ENCODE measurements at regions of chr15 and their contacts with region 1.

Region 1: GRCh38 chr15:56245871-56246814 is 2.5 kb upstream of the RFX7 start:
- DNase-seq: peak; percentile 91
- ATAC-seq: peak; percentile 67
- H3K4me3 ChIP-seq: peak overlapping the region; percentile 76
- H3K27ac ChIP-seq: peak overlapping the region; percentile 34; the same call in 1 of the 2 replicates
- H3K4me1 ChIP-seq: peaks cover 9% of the 10 kb centered on the region; the same call in 1 of the 2 replicates
- H3K27me3 ChIP-seq: no peaks in the 10 kb centered on the region
- CTCF ChIP-seq: peak; percentile 100

Region 2: GRCh38 chr15:55993111-55993803 is 252.9 kb before region 1 on chr15 and contains the start of gene NEDD4:
- CTCF ChIA-PET with region 1: no interaction called
- POLR2A ChIA-PET with region 1: no interaction called
- intact Hi-C with region 1: loop called (anchors 5 kb)
- DNase-seq: peak; percentile 81
- ATAC-seq: peak; percentile 91
- H3K4me3 ChIP-seq: peak within 1 kb of the TSS; percentile 72
- H3K27ac ChIP-seq: peak within 1 kb of the TSS; percentile 23; the same call in 1 of the 2 replicates
- H3K4me1 ChIP-seq: peaks cover 12% of the 10 kb centered on the region
- H3K27me3 ChIP-seq: no peaks in the 10 kb centered on the region
- CTCF ChIP-seq: peak; percentile 28
- total RNA-seq, gene NEDD4: 7.5 and 9.6 TPM in 2 replicates

Region 3: GRCh38 chr15:56098195-56098863 is 147.8 kb before region 1 on chr15:
- CTCF ChIA-PET with region 1: interaction called, 18 read pairs
- POLR2A ChIA-PET with region 1: no interaction called
- intact Hi-C with region 1: no loop called
- DNase-seq: peak; percentile 32
- ATAC-seq: no peak
- H3K4me3 ChIP-seq: no peak overlapping the region
- H3K27ac ChIP-seq: no peak overlapping the region
- H3K4me1 ChIP-seq: no peaks in the 10 kb centered on the region
- H3K27me3 ChIP-seq: no peaks in the 10 kb centered on the region
- CTCF ChIP-seq: peak; percentile 52; the same call in 1 of the 2 replicates

Region 4: GRCh38 chr15:56365075-56365711 is 119.0 kb after region 1 on chr15 and contains the start of gene TEX9:
- CTCF ChIA-PET with region 1: no interaction called
- POLR2A ChIA-PET with region 1: no interaction called
- intact Hi-C with region 1: loop called (anchors 5 kb)
- DNase-seq: peak; percentile 77
- ATAC-seq: peak; percentile 98
- H3K4me3 ChIP-seq: peak within 1 kb of the TSS; percentile 97
- H3K27ac ChIP-seq: no peak within 1 kb of the TSS
- H3K4me1 ChIP-seq: no peaks in the 10 kb centered on the region
- H3K27me3 ChIP-seq: no peaks in the 10 kb centered on the region
- CTCF ChIP-seq: no peak
- total RNA-seq, gene TEX9: 2.4 and 3.3 TPM in 2 replicates

Region 5: GRCh38 chr15:56383010-56383409 is 136.9 kb after region 1 on chr15:
- CTCF ChIA-PET with region 1: no interaction called
- POLR2A ChIA-PET with region 1: no interaction called
- intact Hi-C with region 1: no loop called
- DNase-seq: peak; percentile 17
- ATAC-seq: no peak
- H3K4me3 ChIP-seq: no peak overlapping the region
- H3K27ac ChIP-seq: no peak overlapping the region
- H3K4me1 ChIP-seq: no peaks in the 10 kb centered on the region
- H3K27me3 ChIP-seq: no peaks in the 10 kb centered on the region
- CTCF ChIP-seq: no peak

Region 6: DNA sequence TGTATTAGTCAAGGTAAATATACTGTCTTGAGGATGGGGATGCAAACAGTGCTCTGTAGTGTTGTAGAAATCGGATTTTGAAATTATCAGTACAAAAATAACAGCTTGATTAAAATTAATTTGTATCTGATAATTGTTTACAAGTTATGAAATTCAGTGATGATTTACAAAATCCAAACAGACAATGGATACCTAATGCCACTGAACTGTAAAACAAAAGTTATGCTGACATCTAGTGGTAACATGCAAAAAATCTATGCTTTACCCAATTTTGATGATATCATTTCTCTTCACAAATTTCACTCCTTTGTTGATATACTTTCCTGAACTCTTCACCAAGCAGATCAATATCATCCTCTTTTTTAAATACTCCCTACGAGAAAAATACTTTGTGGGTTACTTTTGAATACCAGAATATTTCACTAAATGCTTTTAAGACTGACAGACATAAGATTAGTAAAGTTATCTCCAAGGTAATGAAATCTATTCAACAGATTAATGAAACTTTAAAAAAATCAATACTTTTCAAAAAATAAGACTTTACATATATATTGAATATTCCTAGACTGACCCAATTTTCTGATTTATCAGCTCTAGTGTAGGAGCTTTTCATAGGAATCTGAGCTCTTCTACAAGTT is 182.8 kb after region 1 on chr15:
- CTCF ChIA-PET with region 1: no interaction called
- POLR2A ChIA-PET with region 1: no interaction called
- intact Hi-C with region 1: loop called (anchors 1 kb)
- DNase-seq: peak; percentile 53
- ATAC-seq: no peak
- H3K4me3 ChIP-seq: no peak overlapping the region
- H3K27ac ChIP-seq: no peak overlapping the region
- H3K4me1 ChIP-seq: no peaks in the 10 kb centered on the region
- H3K27me3 ChIP-seq: no peaks in the 10 kb centered on the region
- CTCF ChIP-seq: peak; percentile 66

Measured in PC-3 (cell line).